ENCODE measurements at regions of chr14 and their contacts with region 1.

Region 1: GRCh38 chr14:68307014-68307789 is 485.7 kb downstream of the ZFP36L1 start:
- DNase-seq: peak; percentile 79 to 80
- H3K4me3 ChIP-seq: no peak overlapping the region
- H3K4me3 Mint-ChIP-seq: no peak overlapping the region
- H3K27ac Mint-ChIP-seq: no peak overlapping the region
- H3K4me1 ChIP-seq: peaks cover 22% of the 10 kb centered on the region
- H3K4me1 Mint-ChIP-seq: peaks cover 18% of the 10 kb centered on the region
- H3K27me3 ChIP-seq: no peaks in the 10 kb centered on the region
- H3K27me3 Mint-ChIP-seq: no peaks in the 10 kb centered on the region
- CTCF ChIP-seq: no peak

Region 2: DNA sequence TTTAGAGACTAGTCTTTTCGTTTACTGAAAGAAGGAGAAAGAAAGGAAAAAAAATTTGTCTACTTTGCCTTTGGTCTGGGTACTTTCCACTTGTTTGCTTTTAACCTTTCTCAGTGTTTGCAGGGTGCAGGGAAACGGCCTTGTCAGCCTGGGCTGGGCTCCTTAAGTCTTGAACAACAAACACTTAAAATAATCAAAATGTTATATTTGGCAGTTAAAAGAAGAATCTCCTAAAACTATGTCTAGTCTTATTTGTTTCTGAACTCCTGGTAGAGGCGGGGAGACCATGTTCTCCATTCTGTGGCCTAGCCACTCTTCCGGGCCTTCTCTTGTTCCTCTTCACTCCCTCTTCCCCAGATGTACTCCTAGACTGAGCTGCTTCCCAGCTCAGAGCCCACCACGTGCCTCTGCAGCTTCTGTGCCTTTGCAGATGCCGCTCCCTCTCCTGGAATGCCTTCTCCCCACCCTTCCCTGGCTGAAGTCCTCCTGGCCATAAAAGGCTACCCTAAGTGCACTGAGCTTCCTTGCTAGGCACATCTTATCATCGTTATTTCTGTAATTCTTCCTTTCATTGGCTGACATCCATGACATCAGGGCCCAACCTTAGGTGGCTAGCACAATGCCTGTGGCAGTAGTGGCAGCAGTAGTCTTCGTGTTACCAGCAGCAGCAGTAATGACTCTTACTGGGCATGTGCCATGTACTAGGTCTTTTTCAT is 52.8 kb after region 1 on chr14:
- CTCF ChIA-PET with region 1: no interaction called
- POLR2A ChIA-PET with region 1: no interaction called
- intact Hi-C with region 1: loop called (anchors 5 kb)
- DNase-seq: peak; percentile 55 to 87
- H3K4me3 ChIP-seq: no peak overlapping the region
- H3K4me3 Mint-ChIP-seq: peak overlapping the region; percentile 29
- H3K27ac Mint-ChIP-seq: peak overlapping the region; percentile 92
- H3K4me1 ChIP-seq: peaks cover 26% of the 10 kb centered on the region
- H3K4me1 Mint-ChIP-seq: peaks cover 34% of the 10 kb centered on the region
- H3K27me3 ChIP-seq: no peaks in the 10 kb centered on the region
- H3K27me3 Mint-ChIP-seq: no peaks in the 10 kb centered on the region
- CTCF ChIP-seq: no peak

Region 3: GRCh38 chr14:68369281-68370056 is 62.3 kb after region 1 on chr14:
- CTCF ChIA-PET with region 1: no interaction called
- POLR2A ChIA-PET with region 1: no interaction called
- intact Hi-C with region 1: loop called (anchors 2 kb)
- DNase-seq: no peak
- H3K4me3 ChIP-seq: no peak overlapping the region
- H3K4me3 Mint-ChIP-seq: no peak overlapping the region
- H3K27ac Mint-ChIP-seq: no peak overlapping the region
- H3K4me1 ChIP-seq: peaks cover 26% of the 10 kb centered on the region
- H3K4me1 Mint-ChIP-seq: peaks cover 37% of the 10 kb centered on the region
- H3K27me3 ChIP-seq: no peaks in the 10 kb centered on the region
- H3K27me3 Mint-ChIP-seq: no peaks in the 10 kb centered on the region
- CTCF ChIP-seq: no peak